ENCODE measurements at regions of chr3 and their contacts with region 1.

Region 1: GRCh38 chr3:161117646-161118045 is 12.5 kb upstream of the B3GALNT1 start:
- DNase-seq: no peak
- H3K4me3 ChIP-seq: no peak overlapping the region
- H3K27ac ChIP-seq: no peak overlapping the region
- H3K4me1 ChIP-seq: no peaks in the 10 kb centered on the region
- CTCF ChIP-seq: no peak

Region 2: DNA sequence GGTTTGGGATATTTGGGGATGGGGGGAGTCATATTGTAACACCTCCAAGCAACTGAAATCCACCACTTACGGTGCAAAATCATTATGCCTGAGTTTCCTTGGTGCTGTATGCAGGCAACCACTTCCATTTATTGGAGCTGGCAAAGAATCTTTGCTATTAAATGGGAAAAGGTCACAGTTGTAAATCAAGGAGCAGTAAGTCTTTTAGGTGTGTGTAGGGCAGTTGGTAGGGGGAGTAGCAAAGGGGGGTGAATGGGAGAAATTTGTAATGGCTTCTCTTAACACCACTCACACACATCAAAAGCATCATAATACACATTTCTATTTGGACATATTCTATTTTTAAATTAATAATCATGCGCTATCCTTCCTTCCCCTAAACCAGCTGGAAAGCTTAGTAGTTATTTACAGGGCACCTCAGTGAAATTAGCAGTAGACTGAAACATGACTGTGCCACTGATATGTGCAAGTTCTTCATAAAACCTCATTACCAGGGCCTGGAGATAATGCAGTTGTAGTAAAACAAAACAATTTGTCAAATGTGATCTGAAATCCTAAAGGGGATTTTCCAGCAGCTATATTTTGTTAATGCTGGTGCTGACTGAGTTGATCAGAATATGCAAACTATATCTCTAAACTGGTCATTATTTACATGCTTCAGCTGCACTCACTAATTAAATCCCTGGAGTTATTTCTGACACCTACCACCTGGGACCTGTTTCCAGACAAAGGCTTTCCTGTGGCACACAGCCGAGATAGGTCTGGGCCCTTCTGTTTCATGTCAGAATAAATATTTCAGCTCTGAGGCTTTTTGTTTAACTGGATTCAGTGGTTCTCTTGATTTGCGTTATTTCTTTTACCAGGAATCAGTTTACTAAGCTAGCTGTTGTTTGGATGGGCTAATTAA is 102.5 kb before region 1 on chr3:
- CTCF ChIA-PET with region 1: no interaction called
- POLR2A ChIA-PET with region 1: interaction called, 11 read pairs
- intact Hi-C with region 1: no loop called
- DNase-seq: peak; percentile 72
- H3K4me3 ChIP-seq: peak overlapping the region; percentile 52
- H3K27ac ChIP-seq: peak overlapping the region; percentile 96
- H3K4me1 ChIP-seq: peaks cover 48% of the 10 kb centered on the region
- CTCF ChIP-seq: no peak

Region 3: GRCh38 chr3:161323926-161324621 is 206.4 kb after region 1 on chr3:
- CTCF ChIA-PET with region 1: no interaction called
- POLR2A ChIA-PET with region 1: no interaction called
- intact Hi-C with region 1: no loop called
- DNase-seq: no peak
- H3K4me3 ChIP-seq: no peak overlapping the region
- H3K27ac ChIP-seq: no peak overlapping the region
- H3K4me1 ChIP-seq: no peaks in the 10 kb centered on the region
- CTCF ChIP-seq: no peak

Measured in OCI-LY7 (cell line).